ENCODE measurements at regions of chr12 and their contacts with region 1.

Region 1: DNA sequence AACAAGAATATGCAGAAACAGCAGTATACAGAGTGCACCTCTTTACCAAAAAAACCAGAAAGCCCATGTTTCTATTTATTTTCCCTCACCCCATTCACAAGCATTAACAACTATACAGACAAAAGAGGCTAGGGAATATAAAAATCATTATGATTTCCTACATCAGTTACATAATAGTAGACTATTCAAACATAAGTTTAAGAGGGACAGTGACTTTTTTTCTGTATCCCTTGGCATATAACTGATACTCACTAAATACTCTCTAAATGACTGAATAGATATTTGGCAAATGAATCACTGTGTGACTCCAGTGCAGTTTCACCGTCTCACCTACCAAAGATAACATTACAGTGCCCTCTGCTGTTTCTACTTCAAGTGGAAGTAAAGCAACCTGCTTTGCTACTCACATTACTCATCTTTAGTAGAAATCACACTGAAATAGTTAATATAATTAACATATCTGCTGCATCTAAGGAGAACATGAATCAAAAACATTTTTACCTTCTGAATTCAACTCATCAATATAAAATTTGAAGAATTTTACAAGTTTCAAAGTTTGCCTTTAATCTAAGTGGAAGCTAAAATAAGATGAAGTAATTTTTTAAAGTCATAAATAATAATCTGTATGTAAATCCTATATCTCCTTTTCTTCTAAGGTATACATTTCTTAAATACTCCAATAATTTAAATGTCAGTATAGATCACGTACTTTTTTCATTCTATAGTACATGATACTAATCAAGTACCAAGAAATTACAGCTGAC is 103.8 kb downstream of the OSBPL8 start:
- DNase-seq: peak; percentile 24
- H3K4me3 Mint-ChIP-seq: no peak overlapping the region
- H3K27ac Mint-ChIP-seq: no peak overlapping the region
- H3K4me1 Mint-ChIP-seq: peaks cover 20% of the 10 kb centered on the region
- H3K27me3 Mint-ChIP-seq: no peaks in the 10 kb centered on the region

Region 2: GRCh38 chr12:75489613-75490210 is 966.1 kb before region 1 on chr12:
- CTCF ChIA-PET with region 1: interaction called, 4 read pairs
- POLR2A ChIA-PET with region 1: no interaction called
- intact Hi-C with region 1: loop called (anchors 5 kb)
- DNase-seq: peak; percentile 58
- H3K4me3 Mint-ChIP-seq: no peak overlapping the region
- H3K27ac Mint-ChIP-seq: peak overlapping the region; percentile 72
- H3K4me1 Mint-ChIP-seq: peaks cover 45% of the 10 kb centered on the region
- H3K27me3 Mint-ChIP-seq: no peaks in the 10 kb centered on the region

Region 3: DNA sequence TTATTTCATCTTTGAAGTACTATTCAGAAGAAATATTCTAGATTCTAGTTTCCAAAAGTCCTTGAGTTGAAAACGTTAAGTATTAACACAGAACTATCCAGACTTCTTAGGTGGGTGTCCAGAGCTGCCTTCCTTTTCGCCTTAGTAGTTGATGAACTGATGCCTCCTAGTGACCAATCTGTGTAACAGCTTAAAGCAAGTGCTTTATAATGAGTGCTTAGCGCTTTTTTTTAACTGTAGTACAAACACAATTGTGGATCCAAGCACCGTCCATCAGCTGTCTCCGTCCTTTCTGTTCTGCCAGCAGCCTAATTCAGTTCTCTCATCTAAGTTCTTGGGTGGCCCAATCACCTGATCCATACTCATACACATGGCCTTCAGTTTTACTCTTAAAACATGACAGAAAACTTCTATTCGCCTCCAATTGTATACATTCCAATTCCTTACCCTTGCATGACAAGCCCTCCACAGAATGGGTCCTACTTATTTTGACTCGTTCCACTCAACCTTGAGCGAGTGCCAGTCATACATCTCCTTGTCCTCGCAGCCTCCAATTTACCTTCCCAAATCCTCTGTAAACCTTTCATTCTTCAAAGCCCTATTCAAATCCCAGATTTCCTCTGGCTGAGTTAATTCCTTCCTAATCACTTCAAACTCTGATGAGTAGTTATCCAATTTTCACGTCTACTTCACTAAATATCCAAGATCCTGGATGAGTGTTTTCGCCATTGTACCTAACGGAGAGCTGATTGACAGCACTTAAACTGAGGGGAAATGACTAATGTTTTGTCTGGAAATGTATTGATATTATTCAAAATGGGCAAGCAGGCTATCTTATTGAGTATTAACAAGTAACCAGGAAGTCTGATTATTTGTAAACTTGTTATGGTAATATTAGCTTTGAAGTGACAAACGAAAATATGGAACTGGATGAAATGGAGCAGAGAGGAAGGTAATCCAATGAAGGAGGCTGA is 418.3 kb before region 1 on chr12:
- CTCF ChIA-PET with region 1: interaction called, 4 read pairs
- POLR2A ChIA-PET with region 1: no interaction called
- intact Hi-C with region 1: loop called (anchors 5 kb)
- DNase-seq: no peak
- H3K4me3 Mint-ChIP-seq: no peak overlapping the region
- H3K27ac Mint-ChIP-seq: no peak overlapping the region
- H3K4me1 Mint-ChIP-seq: peaks cover 19% of the 10 kb centered on the region
- H3K27me3 Mint-ChIP-seq: no peaks in the 10 kb centered on the region

Region 4: DNA sequence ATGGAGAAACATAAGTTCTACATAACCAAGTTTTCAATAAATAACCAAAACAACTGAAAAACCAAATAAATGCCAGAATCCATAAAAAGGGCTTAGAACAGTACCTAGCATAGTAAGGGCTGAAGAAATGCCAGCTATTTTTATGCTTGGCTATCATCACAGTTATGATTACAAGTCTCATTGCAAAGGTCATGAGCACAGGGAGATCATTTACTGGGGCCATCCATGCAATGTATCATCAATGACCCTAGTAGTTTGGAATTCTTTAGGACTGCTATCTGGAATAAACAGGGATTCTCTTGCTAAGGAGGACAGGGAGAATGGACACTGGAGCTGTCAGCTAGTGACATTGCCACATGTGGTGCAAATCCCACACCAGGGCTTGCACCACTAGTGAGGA is 278.8 kb before region 1 on chr12:
- CTCF ChIA-PET with region 1: no interaction called
- POLR2A ChIA-PET with region 1: no interaction called
- intact Hi-C with region 1: no loop called
- DNase-seq: no peak
- H3K4me3 Mint-ChIP-seq: no peak overlapping the region
- H3K27ac Mint-ChIP-seq: no peak overlapping the region
- H3K4me1 Mint-ChIP-seq: no peaks in the 10 kb centered on the region
- H3K27me3 Mint-ChIP-seq: peaks cover 33% of the 10 kb centered on the region

Region 5: DNA sequence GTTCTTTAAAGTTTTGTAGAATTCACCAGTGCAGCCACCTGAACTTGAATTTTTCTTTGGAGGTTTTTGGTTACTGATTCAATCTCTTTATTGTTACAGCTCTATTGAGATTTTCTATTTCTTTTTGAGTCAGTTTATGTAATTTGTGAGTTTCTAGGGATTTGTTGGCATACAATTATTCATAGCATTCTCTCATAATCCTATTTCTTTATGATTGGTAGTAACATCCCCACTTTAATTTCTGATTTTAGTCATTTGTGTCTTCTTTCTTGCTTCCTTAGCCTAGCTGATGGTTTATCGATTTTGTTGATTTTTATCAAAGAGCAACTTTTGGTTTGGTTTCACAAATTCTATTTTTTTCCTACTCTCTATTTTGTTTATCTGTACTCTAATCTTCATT is 89.6 kb before region 1 on chr12:
- CTCF ChIA-PET with region 1: no interaction called
- POLR2A ChIA-PET with region 1: no interaction called
- intact Hi-C with region 1: loop called (anchors 5 kb)
- DNase-seq: no peak
- H3K4me3 Mint-ChIP-seq: no peak overlapping the region
- H3K27ac Mint-ChIP-seq: no peak overlapping the region
- H3K4me1 Mint-ChIP-seq: peaks cover 11% of the 10 kb centered on the region
- H3K27me3 Mint-ChIP-seq: no peaks in the 10 kb centered on the region

Region 6: GRCh38 chr12:76559400-76560085 is 103.8 kb after region 1 on chr12 and contains the start of gene OSBPL8:
- CTCF ChIA-PET with region 1: interaction called, 4 read pairs
- POLR2A ChIA-PET with region 1: interaction called, 6 read pairs
- intact Hi-C with region 1: loop called (anchors 5 kb)
- DNase-seq: peak; percentile 98
- H3K4me3 Mint-ChIP-seq: peak within 1 kb of the TSS; percentile 88
- H3K27ac Mint-ChIP-seq: peak within 1 kb of the TSS; percentile 97
- H3K4me1 Mint-ChIP-seq: peaks cover 34% of the 10 kb centered on the region
- H3K27me3 Mint-ChIP-seq: no peaks in the 10 kb centered on the region
- total RNA-seq, gene OSBPL8: 69.8 to 73.7 TPM

Measured in activated CD4-positive, alpha-beta memory T cell treated with anti-CD3 and anti-CD28 coated beads for 36 hours (primary cell).